HepG2 (cell line): ENCODE measurements at regions of chr20 and their contacts with region 1.

Region 1: GRCh38 chr20:33992923-33993575 is 662 bp upstream of the RALY start:
- DNase-seq: peak; percentile 100
- ATAC-seq: peak; percentile 84
- H3K4me3 ChIP-seq: peak overlapping the region; percentile 95 to 98 (median 96)
- H3K27ac ChIP-seq: peak overlapping the region; percentile 92
- H3K4me1 ChIP-seq: peaks cover 53% of the 10 kb centered on the region
- H3K27me3 ChIP-seq: no peaks in the 10 kb centered on the region; a peak in 1 of 5 replicates
- CTCF ChIP-seq: no peak
- EP300 ChIP-seq: peak in 1 of 2 experiments; percentile 25; a peak in 1 of 4 replicates
- POLR2A ChIP-seq: peak; percentile 99
- RAD21 ChIP-seq: peak; percentile 42; the same call in 1 of the 2 replicates

Region 2: DNA sequence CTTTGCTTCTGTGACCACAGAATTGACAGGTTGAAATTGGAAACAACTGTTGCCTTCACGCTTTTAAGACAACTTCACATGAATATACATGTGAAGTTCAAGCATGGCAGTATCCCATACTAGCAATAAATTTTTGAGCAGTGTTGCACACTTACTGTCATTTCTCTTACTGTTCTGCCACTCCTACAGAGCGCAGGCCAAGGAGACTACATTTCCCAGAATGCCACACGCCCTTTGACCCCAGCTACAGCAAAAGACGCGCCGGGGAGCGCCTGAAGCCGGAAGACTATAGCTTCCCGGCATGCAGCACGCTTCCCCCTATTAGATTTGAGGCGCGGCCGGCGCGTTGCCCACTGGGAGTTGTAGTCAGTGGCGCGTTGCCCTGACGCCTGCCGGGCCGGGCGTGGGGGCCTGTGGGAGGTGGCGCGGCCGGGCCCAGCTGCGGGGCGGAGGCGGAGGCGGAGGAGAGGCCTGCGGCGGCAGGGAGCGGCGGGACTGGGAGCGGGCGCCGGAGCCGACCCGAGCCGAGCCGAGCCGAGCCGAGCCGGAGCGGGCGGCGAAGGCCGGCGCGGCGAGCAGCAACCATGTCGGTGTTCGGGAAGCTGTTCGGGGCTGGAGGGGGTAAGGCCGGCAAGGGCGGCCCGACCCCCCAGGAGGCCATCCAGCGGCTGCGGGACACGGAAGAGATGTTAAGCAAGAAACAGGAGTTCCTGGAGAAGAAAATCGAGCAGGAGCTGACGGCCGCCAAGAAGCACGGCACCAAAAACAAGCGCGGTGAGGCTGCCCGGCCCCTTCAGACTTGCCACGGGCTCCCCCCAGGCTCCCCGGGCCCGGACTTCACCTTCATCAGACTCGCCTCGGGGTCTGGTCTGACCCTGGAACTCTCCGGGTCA is 181.9 kb before region 1 on chr20 and contains the start of gene CHMP4B:
- CTCF ChIA-PET with region 1: no interaction called
- POLR2A ChIA-PET with region 1: interaction called, 32 read pairs
- in situ Hi-C with region 1: no loop called
- intact Hi-C with region 1: no loop called
- DNase-seq: peak; percentile 99
- ATAC-seq: peak; percentile 94
- H3K4me3 ChIP-seq: peak within 1 kb of the TSS; percentile 83 to 96 (median 87)
- H3K27ac ChIP-seq: peak within 1 kb of the TSS; percentile 72
- H3K4me1 ChIP-seq: peaks cover 59% of the 10 kb centered on the region
- H3K27me3 ChIP-seq: no peaks in the 10 kb centered on the region; a peak in 1 of 5 replicates
- CTCF ChIP-seq: no peak
- EP300 ChIP-seq: peak; percentile 40 to 54; a peak in 2 of 4 replicates
- POLR2A ChIP-seq: peak; percentile 70 to 74
- RAD21 ChIP-seq: peak; percentile 70
- total RNA-seq, gene CHMP4B: 40.1 and 55.7 TPM in 2 replicates

Region 3: GRCh38 chr20:33971147-33971975 is 21.7 kb before region 1 on chr20:
- CTCF ChIA-PET with region 1: no interaction called
- POLR2A ChIA-PET with region 1: interaction called, 10 read pairs
- in situ Hi-C with region 1: no loop called
- intact Hi-C with region 1: no loop called
- DNase-seq: no peak
- ATAC-seq: no peak; the same call in 2 of the 3 replicates
- H3K4me3 ChIP-seq: no peak overlapping the region
- H3K27ac ChIP-seq: no peak overlapping the region
- H3K4me1 ChIP-seq: no peaks in the 10 kb centered on the region
- H3K27me3 ChIP-seq: peaks cover 3 to 22% of the 10 kb centered on the region in 2 experiments; a peak in 2 of 5 replicates
- CTCF ChIP-seq: no peak
- EP300 ChIP-seq: no peak
- POLR2A ChIP-seq: no peak
- RAD21 ChIP-seq: no peak

Region 4: GRCh38 chr20:34022154-34022838 is 29.2 kb after region 1 on chr20:
- CTCF ChIA-PET with region 1: interaction called, 3 read pairs
- POLR2A ChIA-PET with region 1: interaction called, 33 read pairs
- in situ Hi-C with region 1: no loop called
- intact Hi-C with region 1: loop called (anchors 2 kb)
- DNase-seq: peak; percentile 72
- ATAC-seq: peak; percentile 75
- H3K4me3 ChIP-seq: no peak overlapping the region
- H3K27ac ChIP-seq: no peak overlapping the region
- H3K4me1 ChIP-seq: peaks cover 56% of the 10 kb centered on the region
- H3K27me3 ChIP-seq: no peaks in the 10 kb centered on the region
- CTCF ChIP-seq: peak; percentile 79
- EP300 ChIP-seq: no peak
- POLR2A ChIP-seq: no peak
- RAD21 ChIP-seq: peak; percentile 84

Region 5: DNA sequence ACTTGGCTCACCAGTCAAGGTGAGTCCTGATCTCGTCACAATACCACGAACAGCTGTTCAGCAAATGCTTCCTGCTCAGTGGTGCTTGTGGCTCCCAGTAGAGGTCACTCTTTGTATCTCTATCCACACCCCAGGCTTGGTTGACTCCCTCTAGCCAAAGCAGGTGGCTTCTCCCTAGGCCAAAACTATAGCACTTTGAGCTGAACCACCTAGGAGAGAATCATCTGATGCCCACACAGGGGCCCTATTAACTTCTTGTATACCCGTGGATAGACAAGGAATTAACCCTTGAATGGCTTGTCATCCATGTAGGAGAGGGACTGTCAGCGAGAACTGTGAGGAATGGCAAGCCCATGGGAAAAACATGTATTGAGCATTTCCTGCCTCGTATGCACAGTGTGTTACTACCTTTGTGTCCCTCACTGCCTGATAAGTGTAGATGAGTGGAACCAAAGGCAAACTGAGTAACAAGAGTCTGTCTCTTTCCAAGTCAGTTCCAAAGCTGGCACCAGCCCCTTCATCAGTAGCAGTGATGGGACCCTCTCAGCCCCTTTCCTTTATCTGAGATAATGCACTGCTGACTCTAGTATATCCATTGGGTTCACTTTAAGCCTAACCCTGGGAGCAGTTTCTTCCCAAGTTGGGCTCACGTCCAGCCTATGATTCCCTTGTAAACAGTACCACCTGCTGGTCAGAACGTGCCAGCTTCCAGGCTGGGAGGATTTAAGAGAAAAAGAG is 76.5 kb after region 1 on chr20:
- CTCF ChIA-PET with region 1: interaction called, 4 read pairs
- POLR2A ChIA-PET with region 1: interaction called, 16 read pairs
- in situ Hi-C with region 1: no loop called
- intact Hi-C with region 1: loop called (anchors 1 kb)
- DNase-seq: peak; percentile 86
- ATAC-seq: peak; percentile 86
- H3K4me3 ChIP-seq: no peak overlapping the region
- H3K27ac ChIP-seq: no peak overlapping the region
- H3K4me1 ChIP-seq: no peaks in the 10 kb centered on the region
- H3K27me3 ChIP-seq: no peaks in the 10 kb centered on the region
- CTCF ChIP-seq: peak; percentile 95
- EP300 ChIP-seq: no peak
- POLR2A ChIP-seq: no peak
- RAD21 ChIP-seq: peak; percentile 97